ACHN (cell line): ENCODE measurements at regions of chr3 and their contacts with region 1.

Region 1: DNA sequence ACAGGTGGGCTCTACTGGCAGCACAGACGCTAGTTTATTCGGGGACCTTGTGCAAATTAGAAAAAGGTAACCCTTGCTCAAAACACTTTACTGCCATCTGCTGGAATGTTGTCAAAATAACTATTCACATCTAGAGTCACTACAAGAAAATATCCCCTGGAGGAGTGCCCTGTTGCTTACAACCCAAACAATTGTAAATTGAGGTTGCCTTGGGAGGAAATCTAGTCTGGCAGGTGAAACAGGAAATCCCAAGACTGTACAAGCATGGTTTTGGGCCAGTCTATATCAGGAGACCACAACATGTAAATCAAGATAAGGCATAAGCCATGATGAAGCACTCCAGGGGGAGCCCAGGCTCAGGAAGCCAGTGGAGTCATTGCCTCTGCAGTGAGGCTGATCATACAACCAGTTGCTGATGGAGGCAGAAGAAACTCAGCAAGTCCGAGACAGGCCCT is 136.8 kb upstream of the ACP3 start:
- DNase-seq: peak; percentile 64

Region 2: GRCh38 chr3:132029182-132029902 is 151.0 kb before region 1 on chr3:
- in situ Hi-C with region 1: loop called (anchors 25 kb)
- DNase-seq: peak; percentile 72